ENCODE measurements at regions of chr16 and their contacts with region 1.

Region 1: DNA sequence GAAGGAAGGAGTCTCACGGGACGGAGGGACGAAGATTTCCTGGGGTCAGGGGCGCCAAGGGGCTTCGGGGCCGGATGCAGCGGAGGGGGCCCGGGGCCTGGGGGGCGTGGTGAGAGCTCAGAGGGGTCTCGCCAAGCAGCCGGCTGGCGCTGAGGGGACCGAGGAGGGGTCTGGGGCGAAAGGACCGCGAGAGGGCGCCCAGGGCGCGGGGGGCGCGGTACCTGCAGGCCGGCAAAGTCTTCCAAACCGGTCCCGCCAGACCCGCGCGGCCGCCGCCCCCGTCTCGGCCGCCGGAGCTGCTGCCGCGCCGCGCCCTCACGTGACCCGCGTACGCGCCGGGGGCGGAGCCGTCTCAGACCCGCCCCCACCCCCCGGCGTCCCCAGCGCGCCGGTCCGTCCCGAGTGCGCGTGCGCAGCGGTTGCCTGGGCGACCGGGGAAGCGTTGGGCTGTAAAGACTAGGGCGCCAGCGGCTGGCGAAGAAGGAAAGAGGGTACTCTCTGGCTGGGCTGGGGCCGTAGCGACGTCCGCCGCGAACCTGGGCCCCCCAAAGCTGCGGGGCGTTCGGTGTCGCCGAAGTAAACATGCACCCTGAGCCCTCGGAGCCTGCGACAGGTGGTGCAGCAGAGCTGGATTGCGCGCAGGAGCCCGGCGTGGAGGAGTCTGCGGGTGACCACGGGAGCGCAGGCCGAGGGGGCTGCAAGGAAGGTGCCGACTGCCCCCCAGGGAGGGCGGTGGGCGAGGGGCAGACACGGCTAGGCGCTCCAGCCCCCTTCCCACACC is at the starts of genes DNAAF1 and HSDL1:
- DNase-seq: peak; percentile 42 to 93
- H3K4me3 ChIP-seq: peak within 1 kb of the TSS; percentile 61 to 97
- H3K27ac ChIP-seq: peak within 1 kb of the TSS; percentile 27 to 76
- H3K4me1 ChIP-seq: peaks cover 0 to 7% of the 10 kb centered on the region in 2 donors
- H3K27me3 ChIP-seq: no peaks in the 10 kb centered on the region
- CTCF ChIP-seq: no peak
- total RNA-seq, gene DNAAF1: not detected
- total RNA-seq, gene HSDL1: 12.0 TPM

Region 2: GRCh38 chr16:84116720-84117493 is 28.1 kb before region 1 on chr16 and contains the start of gene MBTPS1:
- intact Hi-C with region 1: loop called (anchors 1 kb)
- DNase-seq: peak; percentile 89 to 99
- H3K4me3 ChIP-seq: peak within 1 kb of the TSS; percentile 84 to 90
- H3K27ac ChIP-seq: peak within 1 kb of the TSS; percentile 86 to 93
- H3K4me1 ChIP-seq: peaks cover 0 to 13% of the 10 kb centered on the region in 2 donors
- H3K27me3 ChIP-seq: no peaks in the 10 kb centered on the region
- CTCF ChIP-seq: no peak
- total RNA-seq, gene MBTPS1: 95.6 TPM